ENCODE measurements at regions of chr6 and their contacts with region 1.

Region 1: DNA sequence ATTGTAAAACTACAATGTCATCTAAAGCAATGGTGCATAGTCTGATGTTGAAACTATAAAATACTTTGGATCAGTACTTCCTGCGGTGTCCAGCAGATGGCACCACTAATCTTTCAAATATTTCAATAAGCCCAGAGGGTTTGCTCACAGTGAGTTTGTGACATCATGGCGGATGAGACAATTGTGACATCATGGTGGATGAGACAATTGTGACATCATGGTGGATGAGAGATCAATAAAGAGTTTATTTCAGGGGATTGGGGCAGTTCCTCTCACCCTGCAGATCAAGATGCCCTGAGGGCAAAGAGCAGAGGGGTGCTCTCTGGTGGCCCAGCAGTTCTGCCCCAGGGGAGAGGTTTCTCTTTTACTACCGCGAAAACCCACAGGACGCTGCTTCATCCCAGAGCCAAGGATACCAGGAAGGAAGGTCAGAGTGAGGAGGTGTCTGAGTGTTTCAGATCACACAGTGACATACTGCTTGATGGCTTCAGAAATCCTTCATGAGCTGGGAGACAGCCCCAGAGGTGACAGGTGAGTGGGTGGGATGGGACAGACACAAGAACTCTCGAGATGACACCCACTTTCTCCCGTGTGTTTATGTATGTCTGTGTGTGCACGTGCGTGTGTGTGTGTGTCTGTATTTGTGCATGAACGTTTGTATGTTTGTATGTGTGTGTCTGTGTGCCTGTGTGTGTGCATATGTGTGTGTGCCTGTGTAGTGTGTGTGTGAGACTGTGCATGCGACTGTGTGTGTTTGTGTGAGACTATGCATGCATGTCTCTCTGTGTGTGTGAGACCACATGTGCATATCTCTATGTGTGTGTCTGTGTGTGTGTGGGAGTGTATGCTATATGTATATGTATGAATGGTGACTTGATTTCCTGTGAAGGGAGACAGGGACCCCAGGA is 7.3 kb upstream of the ULBP2 start:
- DNase-seq: peak in 1 of 2 donors; percentile 56
- ATAC-seq: peak; percentile 81
- H3K4me3 ChIP-seq: no peak overlapping the region
- H3K27ac ChIP-seq: no peak overlapping the region
- H3K4me1 ChIP-seq: no peaks in the 10 kb centered on the region
- H3K27me3 ChIP-seq: no peaks in the 10 kb centered on the region

Region 2: DNA sequence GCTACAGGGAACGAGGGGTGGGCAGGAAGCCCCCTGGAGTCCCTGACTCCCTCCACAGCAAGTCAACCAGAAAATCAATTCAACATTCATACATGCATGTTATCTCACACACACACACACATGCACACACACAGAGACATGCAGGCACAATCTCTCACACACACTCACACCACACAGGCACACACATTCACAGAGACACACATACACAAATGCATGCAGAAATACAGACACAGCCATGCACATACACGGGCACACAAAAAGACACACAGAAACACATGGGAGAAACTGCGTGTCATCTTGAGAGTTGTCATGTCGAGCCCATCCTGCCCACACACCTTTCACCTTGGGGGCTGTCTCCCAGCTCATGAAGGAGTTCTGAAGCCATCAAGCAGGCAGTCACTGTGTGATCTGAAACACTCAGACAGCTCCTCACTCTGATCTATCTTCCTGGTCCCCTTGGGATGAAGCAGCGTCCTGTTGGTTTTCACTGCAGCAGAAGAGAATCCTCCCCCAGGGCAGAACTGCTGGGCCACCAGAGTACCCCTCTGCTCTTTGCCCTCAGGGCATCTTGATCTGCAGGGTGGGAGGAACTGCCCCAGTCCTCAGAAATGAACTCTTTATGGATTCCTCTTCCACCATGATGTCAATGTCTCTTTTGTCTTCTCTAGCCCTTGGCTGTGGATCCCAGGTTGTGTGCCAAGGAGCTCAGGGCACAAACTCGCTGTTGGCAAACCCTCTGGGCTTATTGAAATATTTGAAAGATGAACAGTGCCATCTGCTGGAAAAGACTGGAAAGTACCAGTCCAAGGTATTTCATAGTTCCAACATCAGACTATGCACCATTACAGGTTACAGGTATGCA is 82.1 kb after region 1 on chr6:
- intact Hi-C with region 1: loop called (anchors 2 kb)
- DNase-seq: no peak
- ATAC-seq: peak; percentile 73
- H3K4me3 ChIP-seq: no peak overlapping the region
- H3K27ac ChIP-seq: no peak overlapping the region
- H3K4me1 ChIP-seq: no peaks in the 10 kb centered on the region
- H3K27me3 ChIP-seq: no peaks in the 10 kb centered on the region

Region 3: DNA sequence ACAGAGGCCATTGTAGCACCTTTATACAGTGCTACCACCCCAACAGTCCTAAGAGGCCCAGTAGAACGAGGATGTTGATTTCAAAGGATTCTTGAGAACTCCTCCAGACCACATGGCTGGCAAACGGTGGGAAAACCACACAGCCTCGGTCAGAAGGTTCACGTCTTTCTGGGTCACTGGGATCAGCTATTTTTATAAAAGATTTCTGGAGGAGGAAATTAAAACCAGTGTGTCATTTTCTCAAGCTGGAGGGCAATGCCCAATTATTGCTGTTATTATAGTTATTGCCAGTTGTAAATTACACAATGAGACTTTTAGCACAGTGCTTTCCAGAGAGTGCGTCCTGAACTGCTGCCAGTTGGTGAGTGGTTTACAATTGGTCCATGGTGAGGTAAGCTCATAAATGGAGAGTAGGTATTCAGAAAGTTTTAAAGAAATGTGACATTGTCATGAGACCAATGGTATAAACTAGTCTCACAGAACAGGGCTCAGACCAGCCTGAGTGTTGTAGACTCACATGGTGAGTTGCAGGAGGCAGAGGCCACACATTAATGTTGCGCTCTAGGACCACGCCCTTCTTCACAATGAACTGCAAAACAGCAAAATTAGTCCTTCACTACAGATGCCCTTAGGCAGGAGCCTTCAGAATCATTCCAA is 199.9 kb after region 1 on chr6:
- intact Hi-C with region 1: no loop called
- DNase-seq: no peak
- ATAC-seq: no peak
- H3K4me3 ChIP-seq: no peak overlapping the region
- H3K27ac ChIP-seq: no peak overlapping the region
- H3K4me1 ChIP-seq: no peaks in the 10 kb centered on the region
- H3K27me3 ChIP-seq: peaks cover 0 to 2% of the 10 kb centered on the region in 2 donors

Measured in aorta (tissue), 5 donors.